T-cell (primary cell): ENCODE measurements at regions of chr19 and their contacts with region 1.

Region 1: DNA sequence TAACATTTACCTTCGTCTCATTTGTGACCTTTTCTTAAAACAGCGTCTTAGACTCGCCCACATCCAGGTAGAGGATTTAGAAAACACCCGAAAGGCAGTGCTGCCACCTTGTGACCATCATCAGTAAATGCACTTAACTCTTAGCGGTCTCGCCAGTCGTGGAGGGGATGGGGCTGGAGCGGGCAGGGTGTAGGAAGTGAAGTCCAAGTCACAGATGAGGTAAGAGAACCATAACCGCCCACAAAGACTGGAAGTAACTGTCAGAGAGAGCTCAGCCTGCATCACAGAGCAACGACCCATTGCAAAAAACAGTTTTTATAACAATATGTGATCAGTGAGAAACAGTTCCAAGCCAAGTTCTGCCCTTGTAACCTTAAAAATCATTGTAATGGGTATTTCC is 10.7 kb upstream of the CEACAM3 start:
- DNase-seq: peak; percentile 45 to 91 (median 65)
- ATAC-seq: peak; percentile 90 to 97 (median 94)
- H3K4me3 ChIP-seq: no peak overlapping the region
- H3K4me3 Mint-ChIP-seq: peak overlapping the region in 1 of 3 donors; percentile 5
- H3K27ac ChIP-seq: no peak overlapping the region
- H3K27ac Mint-ChIP-seq: peak overlapping the region in 1 of 2 donors; percentile 15
- H3K4me1 ChIP-seq: peaks cover 10 to 11% of the 10 kb centered on the region in 2 experiments
- H3K4me1 Mint-ChIP-seq: peaks cover 15 to 17% (median 17%) of the 10 kb centered on the region in 3 donors
- H3K27me3 ChIP-seq: peaks cover 2 to 38% of the 10 kb centered on the region in 2 experiments
- H3K27me3 Mint-ChIP-seq: peaks cover 48 to 64% of the 10 kb centered on the region in 2 donors

Region 2: DNA sequence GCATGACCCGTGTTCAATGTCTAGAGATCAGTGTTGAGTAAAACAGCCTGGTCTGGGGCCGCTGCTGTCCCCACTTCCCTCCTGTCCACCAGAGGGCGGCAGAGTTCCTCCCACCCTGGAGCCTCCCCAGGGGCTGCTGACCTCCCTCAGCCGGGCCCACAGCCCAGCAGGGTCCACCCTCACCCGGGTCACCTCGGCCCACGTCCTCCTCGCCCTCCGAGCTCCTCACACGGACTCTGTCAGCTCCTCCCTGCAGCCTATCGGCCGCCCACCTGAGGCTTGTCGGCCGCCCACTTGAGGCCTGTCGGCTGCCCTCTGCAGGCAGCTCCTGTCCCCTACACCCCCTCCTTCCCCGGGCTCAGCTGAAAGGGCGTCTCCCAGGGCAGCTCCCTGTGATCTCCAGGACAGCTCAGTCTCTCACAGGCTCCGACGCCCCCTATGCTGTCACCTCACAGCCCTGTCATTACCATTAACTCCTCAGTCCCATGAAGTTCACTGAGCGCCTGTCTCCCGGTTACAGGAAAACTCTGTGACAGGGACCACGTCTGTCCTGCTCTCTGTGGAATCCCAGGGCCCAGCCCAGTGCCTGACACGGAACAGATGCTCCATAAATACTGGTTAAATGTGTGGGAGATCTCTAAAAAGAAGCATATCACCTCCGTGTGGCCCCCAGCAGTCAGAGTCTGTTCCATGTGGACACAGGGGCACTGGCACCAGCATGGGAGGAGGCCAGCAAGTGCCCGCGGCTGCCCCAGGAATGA is 78.7 kb before region 1 on chr19:
- CTCF ChIA-PET with region 1: interaction called in 1 of 2 experiments, 11 read pairs
- POLR2A ChIA-PET with region 1: no interaction called
- DNase-seq: peak; percentile 27 to 79 (median 59)
- ATAC-seq: peak; percentile 87 to 93 (median 92)
- H3K4me3 ChIP-seq: peak overlapping the region in 1 of 2 donors; percentile 36
- H3K4me3 Mint-ChIP-seq: peak overlapping the region; percentile 56 to 70 (median 67)
- H3K27ac ChIP-seq: no peak overlapping the region
- H3K27ac Mint-ChIP-seq: peak overlapping the region in 1 of 2 donors; percentile 28
- H3K4me1 ChIP-seq: peaks cover 0 to 7% of the 10 kb centered on the region in 2 experiments
- H3K4me1 Mint-ChIP-seq: peaks cover 5 to 12% (median 6%) of the 10 kb centered on the region in 3 donors
- H3K27me3 ChIP-seq: peaks cover 0 to 65% of the 10 kb centered on the region in 2 experiments
- H3K27me3 Mint-ChIP-seq: peaks cover 27 to 45% of the 10 kb centered on the region in 2 donors